Kidney (tissue), 22 donors: ENCODE measurements at regions of chr7 and their contacts with region 1.

Region 1: GRCh38 chr7:36986429-36987362 is 262.4 kb upstream of the AOAH start:
- DNase-seq: peak; percentile 58 to 79 (median 67)
- H3K4me3 ChIP-seq: no peak overlapping the region
- H3K27ac ChIP-seq: no peak overlapping the region
- H3K4me1 ChIP-seq: peaks cover 0 to 3% (median 0%) of the 10 kb centered on the region in 3 donors
- H3K27me3 ChIP-seq: no peaks in the 10 kb centered on the region
- CTCF ChIP-seq: peak; percentile 87

Region 2: GRCh38 chr7:36573066-36573465 is 413.6 kb before region 1 on chr7:
- intact Hi-C with region 1: no loop called
- DNase-seq: no peak
- H3K4me3 ChIP-seq: no peak overlapping the region
- H3K27ac ChIP-seq: no peak overlapping the region
- H3K4me1 ChIP-seq: no peaks in the 10 kb centered on the region
- H3K27me3 ChIP-seq: no peaks in the 10 kb centered on the region
- CTCF ChIP-seq: no peak

Region 3: DNA sequence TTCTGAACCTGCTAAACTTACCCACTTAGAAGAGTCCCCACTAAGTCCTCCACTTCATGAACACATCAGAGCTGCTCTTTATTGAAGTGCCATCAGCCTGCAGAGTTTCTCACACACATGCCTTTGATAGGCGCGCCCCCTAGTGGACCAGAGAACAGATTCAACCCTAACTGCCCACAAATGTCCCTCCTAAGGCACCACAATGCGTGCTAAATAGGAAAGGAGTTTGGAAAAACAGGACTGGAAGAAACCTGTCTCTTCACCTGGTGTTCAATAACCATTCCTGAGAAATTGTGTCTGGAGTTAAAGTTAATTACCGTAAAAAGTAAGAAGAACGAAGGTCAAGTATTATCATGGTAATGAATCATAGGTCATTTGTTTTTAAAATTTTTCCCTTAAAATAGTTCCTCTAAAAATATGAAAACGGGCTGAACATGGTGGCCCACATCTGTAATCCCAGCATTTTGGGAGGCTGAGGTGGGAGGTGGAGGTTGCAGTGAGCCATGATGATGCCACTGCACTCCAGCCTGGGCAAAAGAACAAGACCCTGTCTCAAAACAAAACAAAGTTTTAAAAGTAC is 212.3 kb after region 1 on chr7:
- intact Hi-C with region 1: loop called (anchors 10 kb)
- DNase-seq: peak; percentile 80 to 94 (median 83)
- H3K4me3 ChIP-seq: no peak overlapping the region
- H3K27ac ChIP-seq: no peak overlapping the region
- H3K4me1 ChIP-seq: peaks cover 0 to 6% (median 0%) of the 10 kb centered on the region in 3 donors
- H3K27me3 ChIP-seq: no peaks in the 10 kb centered on the region
- CTCF ChIP-seq: peak; percentile 91